HEK293T (cell line): ENCODE measurements at regions of chr13 and their contacts with region 1.

Region 1: DNA sequence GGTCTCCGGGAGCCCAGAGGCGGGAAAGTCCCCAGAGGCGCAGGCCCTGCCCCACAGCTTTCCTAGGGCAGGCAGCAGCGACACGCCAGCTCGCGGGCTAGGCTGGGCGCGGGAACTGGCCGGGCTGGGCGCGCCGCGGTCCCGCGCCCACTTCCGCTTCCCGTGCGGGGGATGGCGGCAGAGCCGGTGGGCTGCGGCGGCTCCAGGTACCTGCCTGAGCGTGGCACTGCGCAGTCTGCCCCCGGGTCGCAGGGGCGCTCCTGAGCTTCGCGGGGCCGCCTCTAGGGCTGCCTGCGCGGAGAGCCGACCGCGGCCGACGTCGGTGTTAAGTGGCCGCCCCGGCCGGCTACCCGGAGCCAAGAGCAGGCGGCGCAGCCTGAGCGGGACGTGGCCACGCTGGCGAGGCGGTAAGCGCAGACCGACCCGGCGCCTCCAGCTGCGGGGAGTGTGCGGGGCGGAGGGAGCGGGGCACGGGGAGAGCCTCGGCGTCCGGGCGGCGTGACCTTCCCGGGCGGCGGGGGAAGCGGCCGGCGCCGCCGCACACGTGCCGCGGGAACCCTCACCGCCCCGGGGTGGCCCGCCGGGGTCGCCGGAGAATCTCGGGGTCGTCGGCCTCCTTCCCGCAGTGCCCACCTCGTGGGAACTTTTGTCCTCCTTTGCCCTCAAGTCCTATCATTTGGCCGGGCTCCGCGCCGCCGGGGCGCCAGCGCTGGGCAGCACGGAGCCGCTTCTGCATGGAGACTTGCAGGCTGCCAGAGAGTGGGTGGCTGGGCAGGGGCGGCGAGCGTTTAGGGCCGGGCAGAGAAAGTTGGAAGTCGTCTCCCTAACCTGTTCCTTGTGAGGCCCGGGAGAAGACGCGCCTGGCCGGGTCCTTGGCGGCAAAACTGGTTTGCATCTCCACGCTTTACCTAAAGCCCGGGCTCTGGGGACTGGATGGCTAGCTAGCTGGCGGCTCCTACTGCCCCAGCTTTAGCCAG is 31.4 kb upstream of the MPHOSPH8 start:
- DNase-seq: peak; percentile 48

Region 2: GRCh38 chr13:19633479-19634255 is 31.6 kb after region 1 on chr13 and contains the start of gene MPHOSPH8:
- CTCF ChIA-PET with region 1: no interaction called
- POLR2A ChIA-PET with region 1: interaction called, 10 read pairs
- DNase-seq: peak; percentile 84

Region 3: DNA sequence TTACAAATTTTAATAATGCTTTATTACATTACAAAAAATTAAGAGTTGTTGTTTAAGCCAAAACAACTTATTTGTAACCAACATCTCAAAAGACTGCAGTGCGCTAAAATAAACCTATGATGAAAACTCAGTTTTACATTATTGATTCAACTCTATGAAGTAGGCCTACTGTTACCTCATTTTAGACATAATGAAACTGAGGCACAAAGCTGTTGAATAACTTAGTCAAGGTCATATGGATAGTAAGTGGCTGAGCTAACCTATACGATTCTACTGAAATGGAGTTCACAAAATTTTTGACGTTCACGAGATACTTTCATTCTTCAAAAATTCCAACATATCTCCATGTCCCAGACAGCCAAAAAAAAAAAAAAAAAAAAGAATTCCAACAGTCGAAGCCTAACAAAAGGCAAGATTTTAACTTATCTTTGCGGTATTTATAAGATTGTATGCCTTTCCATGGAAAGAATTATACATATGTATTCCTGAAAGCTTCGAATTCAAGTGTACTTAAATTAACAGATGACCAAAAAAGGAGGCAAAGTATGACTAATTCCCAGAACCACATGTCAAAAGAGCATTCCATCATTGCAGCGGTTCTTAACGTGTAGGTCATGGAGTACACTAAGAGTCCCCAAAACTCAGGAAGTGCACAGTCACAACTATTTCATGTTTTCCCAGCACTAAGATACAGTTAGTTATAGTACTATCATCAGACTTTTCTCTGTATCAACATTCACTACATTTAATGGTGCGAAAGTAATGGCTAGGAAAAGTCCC is 111.3 kb after region 1 on chr13:
- CTCF ChIA-PET with region 1: no interaction called
- POLR2A ChIA-PET with region 1: no interaction called
- DNase-seq: no peak